ENCODE measurements at regions of chr3 and their contacts with region 1.

Region 1: DNA sequence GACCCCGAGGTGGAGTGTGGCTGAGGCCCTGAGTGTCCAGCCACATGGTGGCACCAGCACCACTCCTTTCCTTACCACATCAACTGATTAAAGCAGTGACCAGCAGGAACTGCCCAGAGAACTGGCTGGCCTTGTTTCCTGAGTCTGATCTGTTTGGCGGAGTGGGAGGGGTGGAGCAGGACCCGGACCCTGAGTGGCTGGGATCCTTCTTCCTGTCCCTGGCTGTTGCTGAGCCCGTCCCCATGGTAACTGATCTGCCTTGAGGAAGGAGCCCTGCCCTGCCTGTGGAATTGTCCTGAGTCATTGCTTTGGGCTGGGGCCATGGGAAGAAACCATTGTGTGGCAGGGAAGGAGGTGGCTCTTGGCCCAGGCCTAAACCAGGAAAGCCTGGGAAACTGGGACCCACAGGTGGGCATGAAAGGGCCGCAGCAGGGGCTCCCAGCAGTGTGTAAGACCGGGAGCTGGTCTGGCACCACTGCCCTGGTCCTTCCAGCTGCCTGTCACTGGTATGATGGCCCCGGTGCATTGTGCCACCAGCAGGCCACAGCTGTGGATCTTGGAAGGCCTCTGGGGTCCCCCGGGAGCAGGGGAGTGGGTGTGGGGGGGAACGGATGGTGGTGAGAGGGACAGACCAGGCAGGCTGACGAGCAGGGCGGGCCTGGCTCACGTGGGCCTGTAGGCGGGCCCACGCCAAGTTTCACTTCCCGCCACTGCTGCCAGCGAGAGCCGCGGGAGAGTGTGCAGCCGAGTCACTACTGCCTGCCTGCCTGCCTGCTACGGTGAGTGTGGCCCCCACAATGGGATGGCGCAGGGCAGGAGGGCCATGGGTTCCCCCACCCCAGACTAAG is 19.2 kb downstream of the ATRIP start:
- DNase-seq: peak; percentile 96 to 99 (median 98)
- ATAC-seq: peak; percentile 96
- H3K4me3 ChIP-seq: peak overlapping the region; percentile 46 to 71
- H3K27ac ChIP-seq: peak overlapping the region; percentile 100
- H3K4me1 ChIP-seq: peaks cover 28 to 58% of the 10 kb centered on the region in 2 donors
- H3K27me3 ChIP-seq: no peaks in the 10 kb centered on the region
- CTCF ChIP-seq: peak; percentile 52 to 70

Region 2: DNA sequence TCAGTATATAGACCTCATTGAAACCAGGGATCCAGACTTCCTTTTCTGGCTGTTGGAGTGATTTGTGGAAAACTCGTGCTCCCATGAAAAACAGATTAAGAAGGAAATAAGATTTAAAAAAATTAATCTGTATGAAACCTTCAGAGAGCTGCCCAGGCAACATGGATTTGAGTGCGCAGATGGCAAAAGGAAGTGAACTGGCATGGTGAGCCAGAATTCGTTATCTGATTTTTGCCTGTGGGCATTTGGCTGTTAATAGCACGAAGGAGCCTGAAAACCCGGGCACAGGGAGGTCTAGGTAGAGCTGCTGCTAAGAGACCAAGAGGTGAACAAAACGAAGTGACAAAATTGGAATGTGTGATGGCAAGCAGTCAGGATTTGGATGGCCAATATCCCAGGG is 113.2 kb before region 1 on chr3:
- intact Hi-C with region 1: no loop called
- DNase-seq: no peak
- ATAC-seq: no peak
- H3K4me3 ChIP-seq: no peak overlapping the region
- H3K27ac ChIP-seq: no peak overlapping the region
- H3K4me1 ChIP-seq: no peaks in the 10 kb centered on the region
- H3K27me3 ChIP-seq: no peaks in the 10 kb centered on the region
- CTCF ChIP-seq: no peak

Region 3: GRCh38 chr3:48388966-48389365 is 76.8 kb before region 1 on chr3:
- intact Hi-C with region 1: no loop called
- DNase-seq: no peak
- ATAC-seq: no peak
- H3K4me3 ChIP-seq: no peak overlapping the region
- H3K27ac ChIP-seq: no peak overlapping the region
- H3K4me1 ChIP-seq: no peaks in the 10 kb centered on the region
- H3K27me3 ChIP-seq: no peaks in the 10 kb centered on the region
- CTCF ChIP-seq: no peak

Region 4: GRCh38 chr3:48504051-48504946 is 38.5 kb after region 1 on chr3 and contains the start of gene SHISA5:
- intact Hi-C with region 1: loop called in 1 of 2 experiments (anchors 5 kb)
- DNase-seq: peak; percentile 57 to 97 (median 80)
- ATAC-seq: peak; percentile 91
- H3K4me3 ChIP-seq: peak within 1 kb of the TSS; percentile 71 to 78
- H3K27ac ChIP-seq: peak within 1 kb of the TSS; percentile 91 to 97
- H3K4me1 ChIP-seq: peaks cover 9 to 55% of the 10 kb centered on the region in 2 donors
- H3K27me3 ChIP-seq: no peaks in the 10 kb centered on the region
- CTCF ChIP-seq: no peak
- polyA plus RNA-seq, gene SHISA5: 99.2 to 117 (median 112) TPM

Region 5: DNA sequence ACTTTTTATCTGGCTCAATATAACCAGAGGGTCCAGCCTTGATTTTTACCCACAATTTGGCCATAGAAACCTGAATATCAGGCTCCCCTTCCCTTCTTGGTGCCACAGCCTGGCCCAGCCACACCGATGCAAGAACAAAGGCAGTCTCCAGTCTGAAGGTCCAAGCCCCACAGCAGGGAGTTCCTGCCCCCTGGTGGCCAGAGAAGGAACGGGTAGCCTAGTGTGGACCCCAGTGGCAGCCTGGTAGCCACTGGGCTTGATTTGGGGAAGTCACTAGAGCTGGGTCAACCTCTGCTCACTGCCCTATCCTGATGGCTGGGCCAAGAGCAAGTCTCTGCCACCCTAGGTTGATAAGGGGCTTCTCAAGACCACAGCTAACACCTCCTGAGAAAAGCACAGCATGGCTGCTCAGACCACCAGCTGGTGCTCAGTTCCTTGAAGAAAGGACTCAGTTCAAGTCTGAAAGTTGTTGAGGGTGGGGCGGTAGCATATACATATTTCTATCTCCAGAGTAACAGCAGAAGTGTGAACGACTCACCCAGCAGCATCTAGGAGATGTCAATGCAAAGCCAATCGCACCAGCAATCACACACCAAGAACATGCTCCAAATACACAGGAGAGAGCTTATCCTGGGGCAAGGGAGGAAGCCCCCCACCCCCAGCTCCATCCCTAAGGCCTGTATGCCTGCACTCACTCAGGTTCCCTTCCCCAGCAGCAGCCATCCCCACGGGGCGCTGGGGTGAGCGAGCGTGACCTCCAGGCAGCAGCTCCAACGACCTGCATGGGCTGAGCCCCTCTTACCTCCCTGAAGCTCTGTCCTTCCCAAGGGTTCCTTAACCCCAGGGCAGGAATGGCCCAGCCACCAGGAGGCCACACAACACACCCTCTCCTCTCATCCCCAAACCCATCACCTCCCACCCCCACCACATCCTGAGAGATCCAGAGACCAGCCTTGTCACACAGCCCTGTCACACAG is 83.3 kb after region 1 on chr3:
- intact Hi-C with region 1: loop called (anchors 5 to 10 kb)
- DNase-seq: peak; percentile 38 to 93 (median 83)
- ATAC-seq: peak; percentile 96
- H3K4me3 ChIP-seq: no peak overlapping the region
- H3K27ac ChIP-seq: peak overlapping the region in 1 of 2 donors; percentile 23
- H3K4me1 ChIP-seq: peaks cover 0 to 57% of the 10 kb centered on the region in 2 donors
- H3K27me3 ChIP-seq: no peaks in the 10 kb centered on the region
- CTCF ChIP-seq: peak; percentile 90 to 99